IMR-90 (cell line): ENCODE measurements at regions of chr3 and their contacts with region 1.

Region 1: GRCh38 chr3:126522363-126522788 is 1.6 kb upstream of the CHST13 start:
- DNase-seq: peak; percentile 33
- ATAC-seq: peak; percentile 72
- H3K4me3 ChIP-seq: no peak overlapping the region
- H3K27ac ChIP-seq: no peak overlapping the region
- H3K4me1 ChIP-seq: no peaks in the 10 kb centered on the region; the same call in 1 of the 2 replicates
- H3K27me3 ChIP-seq: peaks cover 45% of the 10 kb centered on the region
- CTCF ChIP-seq: peak; percentile 78
- POLR2A ChIP-seq: no peak
- RAD21 ChIP-seq: peak; percentile 78

Region 2: GRCh38 chr3:126582311-126582710 is 59.9 kb after region 1 on chr3:
- CTCF ChIA-PET with region 1: no interaction called
- POLR2A ChIA-PET with region 1: no interaction called
- dilution Hi-C with region 1: no loop called
- in situ Hi-C with region 1: no loop called
- intact Hi-C with region 1: no loop called
- DNase-seq: no peak
- ATAC-seq: no peak
- H3K4me3 ChIP-seq: no peak overlapping the region
- H3K27ac ChIP-seq: no peak overlapping the region
- H3K4me1 ChIP-seq: no peaks in the 10 kb centered on the region
- H3K27me3 ChIP-seq: peaks cover 30% of the 10 kb centered on the region
- CTCF ChIP-seq: no peak
- POLR2A ChIP-seq: no peak
- RAD21 ChIP-seq: no peak

Region 3: DNA sequence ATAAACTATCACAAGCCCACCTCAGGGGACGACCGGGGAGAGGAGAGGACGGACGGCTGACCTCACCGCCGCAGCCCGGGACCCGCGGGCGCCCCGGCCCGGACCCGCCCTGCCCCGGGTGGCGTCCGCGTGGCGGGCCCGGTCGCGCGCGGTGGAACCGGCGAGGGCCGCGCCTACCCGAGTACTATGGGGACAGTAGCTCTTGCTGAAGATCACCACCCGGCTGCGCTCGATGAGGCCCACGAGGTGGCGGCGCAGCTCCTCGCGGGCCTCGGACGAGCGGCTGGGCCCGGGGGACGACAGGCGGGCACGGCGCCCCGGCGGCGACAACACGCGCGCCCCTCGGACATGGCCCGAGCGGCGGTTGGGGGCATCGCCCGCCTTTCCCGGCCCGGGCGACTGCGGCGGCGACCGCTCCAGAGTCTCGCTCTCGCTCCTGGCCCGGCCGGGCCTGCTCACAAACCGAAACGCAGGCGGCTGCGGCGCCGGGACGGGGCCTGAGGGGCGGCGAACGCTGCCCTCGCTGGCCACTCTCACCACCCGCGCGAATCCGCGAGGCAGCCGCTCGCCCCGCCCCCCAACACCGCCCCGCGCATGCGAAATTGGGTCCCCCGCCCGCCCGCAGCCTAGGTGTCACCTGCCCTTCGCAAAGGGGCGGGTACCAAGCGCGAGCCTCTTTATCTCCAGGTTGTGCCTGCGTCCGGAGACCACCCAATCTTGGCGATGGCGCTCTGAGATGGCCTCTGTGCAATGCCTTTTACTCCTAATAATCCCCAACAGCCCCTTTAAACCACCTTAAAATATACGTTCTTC is 132.4 kb after region 1 on chr3 and contains the start of gene TXNRD3:
- CTCF ChIA-PET with region 1: no interaction called
- POLR2A ChIA-PET with region 1: no interaction called
- dilution Hi-C with region 1: no loop called
- in situ Hi-C with region 1: no loop called
- intact Hi-C with region 1: loop called (anchors 2 kb)
- DNase-seq: peak; percentile 49
- ATAC-seq: peak; percentile 97
- H3K4me3 ChIP-seq: peak within 1 kb of the TSS; percentile 92
- H3K27ac ChIP-seq: peak within 1 kb of the TSS; percentile 59; the same call in 1 of the 2 replicates
- H3K4me1 ChIP-seq: no peaks in the 10 kb centered on the region
- H3K27me3 ChIP-seq: peaks cover 7% of the 10 kb centered on the region
- CTCF ChIP-seq: peak; percentile 5; the same call in 1 of the 2 replicates
- POLR2A ChIP-seq: peak; percentile 64; the same call in 1 of the 2 replicates
- RAD21 ChIP-seq: 0 out of 2 replicates have a peak, but pooled peaks have one; percentile 16
- total RNA-seq, gene TXNRD3: 8.1 and 8.4 TPM in 2 replicates

Region 4: DNA sequence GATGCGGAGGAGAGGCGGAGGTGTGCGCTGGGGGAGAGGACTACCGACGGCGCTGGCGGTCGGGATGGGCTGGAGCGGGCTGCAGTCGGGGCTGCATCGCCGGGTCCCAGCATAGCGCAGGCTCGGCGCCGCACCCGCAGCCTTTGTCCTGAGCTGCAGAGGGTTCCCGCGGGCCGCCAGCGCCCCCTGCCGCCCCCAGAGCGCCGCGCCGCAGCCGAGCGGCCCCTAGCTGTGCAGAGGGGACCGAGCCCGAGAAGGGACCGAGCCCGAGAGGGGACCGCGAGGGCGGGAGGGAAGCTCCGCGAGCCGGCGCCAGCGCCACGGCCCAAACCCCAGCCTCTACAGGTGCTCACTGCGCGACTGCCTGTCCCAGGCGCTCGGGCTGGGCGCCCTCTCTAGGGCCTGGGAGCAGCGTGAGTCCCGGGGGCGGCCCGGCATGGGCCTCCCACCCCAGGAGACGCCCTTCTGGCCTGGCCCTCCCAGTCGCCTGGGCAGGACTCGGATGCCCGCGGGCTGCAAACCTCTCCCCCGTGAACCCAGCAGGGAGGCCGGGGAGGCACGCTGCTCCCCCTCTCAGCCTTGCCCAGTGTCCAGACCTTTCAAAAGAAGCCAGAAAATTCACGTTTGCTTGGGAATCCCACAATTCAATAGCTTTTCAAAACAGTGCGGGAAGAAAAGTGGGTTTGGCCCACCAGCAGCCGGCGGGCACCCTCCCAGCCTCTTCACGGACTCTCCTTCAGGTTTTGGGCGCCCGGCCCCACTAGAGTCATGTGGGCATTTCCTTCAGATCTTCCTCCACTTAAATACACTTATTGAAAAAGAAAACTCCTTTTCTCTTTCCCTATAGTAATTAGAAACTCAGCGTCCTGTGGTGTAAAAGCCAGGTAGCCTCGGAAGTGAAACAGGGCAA is 933.4 kb after region 1 on chr3:
- CTCF ChIA-PET with region 1: interaction called, 7 read pairs
- POLR2A ChIA-PET with region 1: no interaction called
- dilution Hi-C with region 1: no loop called
- in situ Hi-C with region 1: loop called (anchors 10 kb)
- intact Hi-C with region 1: loop called (anchors 1 kb)
- DNase-seq: peak; percentile 29
- ATAC-seq: peak; percentile 98
- H3K4me3 ChIP-seq: no peak overlapping the region
- H3K27ac ChIP-seq: no peak overlapping the region
- H3K4me1 ChIP-seq: no peaks in the 10 kb centered on the region
- H3K27me3 ChIP-seq: peaks cover 30% of the 10 kb centered on the region
- CTCF ChIP-seq: peak; percentile 97
- POLR2A ChIP-seq: no peak
- RAD21 ChIP-seq: peak; percentile 87

Region 5: GRCh38 chr3:127544192-127544802 is 1021.9 kb after region 1 on chr3:
- CTCF ChIA-PET with region 1: no interaction called
- POLR2A ChIA-PET with region 1: no interaction called
- dilution Hi-C with region 1: no loop called
- in situ Hi-C with region 1: no loop called
- intact Hi-C with region 1: loop called (anchors 1 kb)
- DNase-seq: peak; percentile 60
- ATAC-seq: peak; percentile 70
- H3K4me3 ChIP-seq: no peak overlapping the region
- H3K27ac ChIP-seq: no peak overlapping the region
- H3K4me1 ChIP-seq: no peaks in the 10 kb centered on the region; the same call in 1 of the 2 replicates
- H3K27me3 ChIP-seq: peaks cover 25% of the 10 kb centered on the region; the same call in 1 of the 2 replicates
- CTCF ChIP-seq: peak; percentile 69
- POLR2A ChIP-seq: no peak
- RAD21 ChIP-seq: peak; percentile 62